ENCODE measurements at regions of chr1 and their contacts with region 1.

Region 1: DNA sequence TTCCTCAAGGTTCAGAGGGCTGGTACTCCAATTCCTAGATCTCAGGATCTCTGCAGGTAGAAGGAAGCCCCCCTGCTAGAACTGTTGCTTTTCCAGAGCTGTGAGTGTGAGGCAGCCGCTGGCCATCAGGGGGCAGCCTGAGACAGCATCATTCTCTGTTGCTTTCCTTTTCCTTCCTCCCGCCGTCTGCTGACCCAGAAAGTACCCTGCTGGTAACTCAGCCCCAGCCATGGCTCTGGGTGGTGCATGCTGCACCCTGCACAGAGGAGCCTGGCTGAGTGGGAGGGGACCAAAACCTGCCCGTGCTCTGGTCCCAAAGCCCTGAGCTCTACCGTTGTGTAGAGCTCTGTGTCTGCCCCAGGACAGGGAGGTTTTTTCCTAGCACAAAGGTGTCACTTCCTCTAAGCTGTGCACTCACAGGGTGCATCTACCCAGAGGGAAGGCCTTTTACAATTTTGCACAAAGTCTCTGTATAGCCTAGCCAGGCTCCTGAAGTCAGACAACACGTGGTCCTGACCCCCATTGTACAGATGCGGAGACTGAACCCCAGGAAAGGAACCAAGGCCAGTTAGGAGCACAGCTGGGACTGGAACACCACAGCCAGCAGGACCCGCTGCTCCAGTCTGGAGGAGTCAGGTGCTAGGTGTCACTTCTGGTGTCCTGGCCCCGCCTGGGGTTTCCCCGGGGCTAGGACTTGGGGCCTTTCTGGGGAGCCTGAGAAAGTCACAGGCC is 5.6 kb upstream of the FAM131C start:
- DNase-seq: peak; percentile 34
- H3K4me3 ChIP-seq: no peak overlapping the region
- H3K27ac ChIP-seq: no peak overlapping the region
- H3K27me3 ChIP-seq: no peaks in the 10 kb centered on the region
- CTCF ChIP-seq: peak; percentile 92

Region 2: DNA sequence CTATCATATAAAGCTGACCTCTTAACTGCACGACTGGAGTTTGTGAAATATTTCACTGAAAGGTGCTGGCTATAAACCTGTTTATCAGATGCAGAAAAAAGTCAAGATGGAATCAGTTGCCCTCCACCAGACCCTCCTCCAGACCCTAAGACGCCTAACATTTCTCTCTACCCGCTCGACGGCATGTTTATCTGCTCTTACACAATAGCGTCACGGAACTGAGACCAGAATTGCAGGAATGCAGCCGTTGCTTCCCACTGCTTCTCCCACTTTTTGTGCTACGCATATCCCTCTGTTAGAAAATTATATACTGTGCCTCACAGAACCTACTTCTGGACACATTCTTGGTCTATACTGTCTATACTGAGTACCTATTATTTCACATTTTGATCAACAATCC is 22.5 kb after region 1 on chr1:
- CTCF ChIA-PET with region 1: interaction called, 10 read pairs
- POLR2A ChIA-PET with region 1: no interaction called
- DNase-seq: no peak
- H3K4me3 ChIP-seq: no peak overlapping the region
- H3K27ac ChIP-seq: no peak overlapping the region
- H3K27me3 ChIP-seq: no peaks in the 10 kb centered on the region
- CTCF ChIP-seq: no peak

Region 3: GRCh38 chr1:16146279-16147155 is 67.4 kb after region 1 on chr1:
- CTCF ChIA-PET with region 1: interaction called, 81 read pairs
- POLR2A ChIA-PET with region 1: interaction called, 3 read pairs
- DNase-seq: peak; percentile 80
- H3K4me3 ChIP-seq: peak overlapping the region; percentile 55
- H3K27ac ChIP-seq: peak overlapping the region; percentile 97
- H3K27me3 ChIP-seq: no peaks in the 10 kb centered on the region
- CTCF ChIP-seq: no peak

Region 4: GRCh38 chr1:16187748-16188401 is 108.8 kb after region 1 on chr1:
- CTCF ChIA-PET with region 1: interaction called, 407 read pairs
- POLR2A ChIA-PET with region 1: interaction called, 3 read pairs
- DNase-seq: peak; percentile 58
- H3K4me3 ChIP-seq: no peak overlapping the region
- H3K27ac ChIP-seq: no peak overlapping the region
- H3K27me3 ChIP-seq: no peaks in the 10 kb centered on the region
- CTCF ChIP-seq: peak; percentile 98

Region 5: DNA sequence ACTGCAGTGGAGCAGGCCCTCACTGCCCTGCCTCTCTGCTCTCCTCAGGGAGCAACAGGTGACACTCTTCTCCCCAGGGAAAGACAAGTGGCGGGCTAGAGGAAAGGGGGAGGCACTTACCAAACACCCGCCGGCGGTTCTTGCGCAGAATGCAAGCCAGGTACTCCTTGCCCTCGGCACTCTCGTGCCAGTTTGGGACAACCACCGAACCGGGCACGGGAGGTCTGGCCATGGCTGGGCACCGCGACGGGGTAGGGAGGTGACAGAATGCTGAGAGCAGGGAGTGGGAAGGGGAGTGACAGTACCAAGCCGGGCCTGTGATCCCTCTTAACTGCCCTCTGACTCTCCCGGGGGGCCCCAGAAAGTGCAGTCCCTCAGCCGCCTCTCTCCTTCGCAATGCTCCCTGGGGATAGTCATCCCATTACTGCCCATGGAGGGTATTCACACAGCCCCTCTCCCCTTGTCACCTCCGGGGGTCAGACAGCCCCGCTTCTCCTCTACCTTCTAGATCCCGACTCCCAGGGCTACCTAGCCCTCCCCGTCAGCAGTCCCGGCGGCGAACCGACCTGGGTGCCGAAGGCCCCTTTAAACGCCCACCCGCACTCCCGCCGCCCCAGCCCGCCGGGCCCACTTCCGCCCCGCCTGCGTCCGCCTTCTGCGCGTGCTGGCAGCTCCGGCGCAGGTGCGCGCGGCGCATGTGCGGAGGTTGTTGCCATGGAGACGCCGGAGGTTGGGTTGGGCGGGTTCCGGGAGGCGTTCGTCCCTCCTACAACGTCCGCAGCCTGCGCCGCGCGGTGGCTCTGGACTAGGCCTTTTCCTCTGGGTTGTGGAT is 157.6 kb after region 1 on chr1 and contains the start of gene CPLANE2:
- CTCF ChIA-PET with region 1: interaction called, 19 read pairs
- POLR2A ChIA-PET with region 1: no interaction called
- DNase-seq: peak; percentile 74
- H3K4me3 ChIP-seq: peak within 1 kb of the TSS; percentile 77
- H3K27ac ChIP-seq: peak within 1 kb of the TSS; percentile 78
- H3K27me3 ChIP-seq: no peaks in the 10 kb centered on the region
- CTCF ChIP-seq: no peak
- polyA plus RNA-seq, gene CPLANE2: 3.6 and 5.7 TPM in 2 replicates

Region 6: DNA sequence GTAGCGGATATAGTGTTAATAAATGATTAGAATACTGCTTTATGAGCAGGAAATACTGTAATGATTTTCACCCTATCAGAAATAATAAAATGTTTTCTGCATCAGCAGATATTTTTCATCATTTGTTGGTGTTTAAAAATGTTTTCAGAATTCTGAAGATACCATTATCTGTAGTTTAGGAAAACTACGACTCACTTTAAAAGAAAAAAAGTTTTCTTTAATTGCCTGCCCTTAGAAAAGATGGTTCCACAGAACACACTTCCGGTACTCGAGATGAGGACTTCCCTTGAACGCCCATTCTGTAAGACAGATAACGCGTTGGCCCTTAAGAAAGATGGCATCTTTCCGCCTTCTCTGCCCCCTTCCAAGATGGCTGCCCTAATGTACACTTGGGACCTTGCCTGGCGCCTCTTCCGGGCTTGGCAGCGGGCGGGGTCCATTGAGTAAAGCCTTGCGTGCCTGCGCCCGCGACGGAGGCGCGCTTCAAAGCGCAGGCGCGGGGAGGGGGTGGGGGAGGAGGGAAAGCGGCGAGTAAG is 287.7 kb after region 1 on chr1 and contains the start of gene SZRD1:
- CTCF ChIA-PET with region 1: interaction called, 20 read pairs
- POLR2A ChIA-PET with region 1: no interaction called
- DNase-seq: peak; percentile 99
- H3K4me3 ChIP-seq: peak within 1 kb of the TSS; percentile 84
- H3K27ac ChIP-seq: peak within 1 kb of the TSS; percentile 97
- H3K27me3 ChIP-seq: no peaks in the 10 kb centered on the region
- CTCF ChIP-seq: no peak
- polyA plus RNA-seq, gene SZRD1: 92.0 and 119 TPM in 2 replicates

Measured in AG04450 (cell line).